Mammary epithelial cell (primary cell): ENCODE measurements at regions of chr3 and their contacts with region 1.

Region 1: GRCh38 chr3:188830893-188831292 is 340.9 kb upstream of the TPRG1 start:
- DNase-seq: no peak
- H3K4me3 ChIP-seq: no peak overlapping the region
- H3K27ac ChIP-seq: no peak overlapping the region
- H3K4me1 ChIP-seq: peaks cover 14% of the 10 kb centered on the region
- H3K27me3 ChIP-seq: no peaks in the 10 kb centered on the region
- CTCF ChIP-seq: peak; percentile 36 to 43

Region 2: GRCh38 chr3:188673646-188674186 is 157.2 kb before region 1 on chr3:
- CTCF ChIA-PET with region 1: no interaction called
- dilution Hi-C with region 1: no loop called
- in situ Hi-C with region 1: no loop called
- intact Hi-C with region 1: no loop called
- DNase-seq: peak; percentile 93
- H3K4me3 ChIP-seq: no peak overlapping the region
- H3K27ac ChIP-seq: peak overlapping the region; percentile 97
- H3K4me1 ChIP-seq: peaks cover 35% of the 10 kb centered on the region
- H3K27me3 ChIP-seq: no peaks in the 10 kb centered on the region
- CTCF ChIP-seq: no peak

Region 3: DNA sequence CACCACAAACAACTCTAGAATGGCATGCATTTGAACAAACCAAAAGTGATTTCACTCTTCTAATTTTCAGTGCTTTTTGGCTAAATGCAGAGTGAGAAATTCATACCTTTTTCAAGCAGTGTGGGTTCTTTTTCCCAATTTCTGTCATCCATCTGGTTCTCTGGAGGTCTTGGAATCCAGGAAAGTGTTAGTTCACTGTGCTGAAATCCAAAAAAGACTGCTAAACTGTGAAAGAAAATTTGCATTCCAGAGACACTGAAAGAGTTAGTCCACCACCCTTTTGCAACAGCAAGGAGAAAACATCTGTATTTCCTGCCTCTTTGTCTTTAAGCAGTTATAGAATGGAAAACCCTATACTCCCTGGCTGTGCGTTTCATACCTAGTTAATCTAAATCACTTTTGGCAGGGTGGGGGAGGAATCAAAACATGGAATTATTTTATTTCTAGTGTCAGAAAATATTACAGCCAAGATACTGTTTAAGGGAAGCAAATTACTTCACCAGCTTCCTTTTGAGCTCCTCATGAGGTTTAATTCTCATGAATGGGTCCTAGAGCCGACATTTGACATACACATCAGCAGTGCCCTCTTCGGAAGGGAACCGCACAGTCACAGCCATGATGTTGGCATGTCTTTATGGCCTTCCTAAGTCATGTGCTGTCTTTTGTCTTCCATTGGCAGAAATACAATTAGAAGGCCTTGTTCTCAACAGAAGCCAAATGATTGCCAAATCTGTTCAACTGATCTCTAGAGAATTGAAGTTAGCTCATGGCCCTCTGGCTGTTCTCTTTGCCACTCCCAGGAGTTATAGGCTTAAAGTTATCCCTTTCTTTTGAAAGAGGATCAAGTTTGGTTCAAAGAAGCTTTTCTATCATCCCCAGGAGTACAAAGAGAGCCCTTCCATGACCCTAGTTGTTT is 23.2 kb after region 1 on chr3:
- CTCF ChIA-PET with region 1: no interaction called
- dilution Hi-C with region 1: no loop called
- in situ Hi-C with region 1: no loop called
- intact Hi-C with region 1: loop called (anchors 1 kb)
- DNase-seq: peak; percentile 73
- H3K4me3 ChIP-seq: no peak overlapping the region
- H3K27ac ChIP-seq: peak overlapping the region; percentile 85
- H3K4me1 ChIP-seq: peaks cover 26% of the 10 kb centered on the region
- H3K27me3 ChIP-seq: no peaks in the 10 kb centered on the region
- CTCF ChIP-seq: no peak

Region 4: DNA sequence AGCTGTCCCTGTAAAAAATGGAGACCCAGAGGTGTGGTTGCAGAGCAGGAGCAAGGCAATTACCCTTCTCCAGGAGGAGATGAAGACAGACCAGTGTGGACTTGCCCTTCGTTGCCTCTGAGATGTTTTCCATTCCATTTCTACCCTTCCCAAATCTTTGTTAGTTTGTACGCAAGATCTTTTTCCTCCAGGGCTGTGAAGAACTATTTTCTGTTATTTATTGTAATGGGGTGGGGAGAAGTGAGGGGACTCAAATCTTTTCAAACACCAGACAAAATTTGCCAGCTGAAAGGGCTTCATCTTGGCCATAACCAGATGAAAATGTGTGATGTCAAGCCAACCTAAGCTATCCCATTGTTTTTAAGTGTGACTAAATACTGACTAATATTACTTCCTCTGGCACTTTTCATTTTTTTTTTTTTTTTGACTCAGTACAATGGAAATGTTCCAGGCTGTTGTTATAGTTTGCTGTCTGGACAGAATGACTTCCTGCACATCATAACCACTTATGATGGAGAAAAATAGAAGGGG is 69.6 kb after region 1 on chr3:
- CTCF ChIA-PET with region 1: no interaction called
- dilution Hi-C with region 1: no loop called
- in situ Hi-C with region 1: no loop called
- intact Hi-C with region 1: loop called (anchors 2 kb)
- DNase-seq: peak; percentile 86
- H3K4me3 ChIP-seq: no peak overlapping the region
- H3K27ac ChIP-seq: peak overlapping the region; percentile 92
- H3K4me1 ChIP-seq: peaks cover 31% of the 10 kb centered on the region
- H3K27me3 ChIP-seq: no peaks in the 10 kb centered on the region
- CTCF ChIP-seq: no peak

Region 5: GRCh38 chr3:188947401-188948280 is 116.7 kb after region 1 on chr3:
- CTCF ChIA-PET with region 1: interaction called, 4 read pairs
- dilution Hi-C with region 1: no loop called
- in situ Hi-C with region 1: loop called in 1 of 2 experiments (anchors 10 kb)
- intact Hi-C with region 1: loop called (anchors 1 kb)
- DNase-seq: peak; percentile 85
- H3K4me3 ChIP-seq: peak overlapping the region; percentile 23 to 47 (median 43)
- H3K27ac ChIP-seq: peak overlapping the region; percentile 86
- H3K4me1 ChIP-seq: peaks cover 37% of the 10 kb centered on the region
- H3K27me3 ChIP-seq: no peaks in the 10 kb centered on the region
- CTCF ChIP-seq: peak; percentile 31 to 53